ENCODE measurements at regions of chr3 and their contacts with region 1.

Region 1: DNA sequence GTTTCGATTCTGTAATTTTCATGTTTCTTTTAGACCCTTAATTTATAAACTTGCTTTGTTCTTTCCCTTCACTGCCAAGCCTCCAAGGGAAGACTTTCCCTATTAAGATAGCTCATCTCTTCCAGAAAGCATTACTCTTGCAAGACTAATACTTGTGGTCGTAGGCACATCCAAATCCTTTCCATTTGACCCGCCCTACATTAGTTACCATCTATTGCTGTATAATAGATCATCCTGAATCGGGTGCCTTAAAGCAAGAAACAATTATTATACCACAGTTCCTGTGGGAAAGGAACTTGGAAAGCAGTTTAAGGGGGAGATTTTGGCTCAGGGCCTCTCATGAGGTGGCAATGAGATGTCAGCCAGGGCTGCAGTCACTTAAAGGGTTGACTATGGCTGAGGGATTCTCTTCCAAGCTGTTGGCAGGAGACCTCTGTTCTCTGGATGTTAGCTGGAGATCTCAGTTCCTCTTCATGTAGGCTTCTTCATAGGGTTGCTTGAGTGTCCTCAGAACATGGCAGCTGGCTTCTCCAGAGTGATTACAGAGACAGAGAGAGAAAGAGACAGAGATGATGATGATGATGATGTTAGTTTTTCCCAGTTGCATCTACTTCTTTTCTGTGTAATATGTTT is 570.4 kb upstream of the TGFBR2 start:
- DNase-seq: peak; percentile 62
- H3K4me3 ChIP-seq: no peak overlapping the region
- H3K27ac ChIP-seq: peak overlapping the region; percentile 96
- H3K4me1 ChIP-seq: peaks cover 46% of the 10 kb centered on the region
- H3K27me3 ChIP-seq: no peaks in the 10 kb centered on the region
- CTCF ChIP-seq: no peak

Region 2: DNA sequence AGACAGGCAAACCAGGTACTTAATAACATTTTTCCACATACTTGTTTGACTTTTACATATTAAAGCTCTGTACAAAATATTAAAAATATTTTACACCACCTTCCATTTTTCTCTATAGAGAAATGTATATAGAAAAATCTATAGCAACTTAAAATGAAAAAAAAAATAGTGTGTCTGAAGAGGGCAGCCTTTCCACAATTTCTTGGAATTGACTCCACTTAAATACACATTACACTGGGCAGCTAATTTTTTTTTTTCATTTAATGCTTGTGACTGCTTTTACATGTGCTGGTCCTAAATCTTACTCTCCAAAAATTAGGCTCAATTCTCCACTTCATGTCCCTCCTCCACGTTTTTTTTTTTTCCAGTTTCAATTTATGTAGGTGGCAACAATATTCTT is 1182.2 kb before region 1 on chr3:
- CTCF ChIA-PET with region 1: no interaction called
- POLR2A ChIA-PET with region 1: no interaction called
- intact Hi-C with region 1: loop called (anchors 10 kb)
- DNase-seq: peak; percentile 31
- H3K4me3 ChIP-seq: no peak overlapping the region
- H3K27ac ChIP-seq: no peak overlapping the region
- H3K4me1 ChIP-seq: peaks cover 3% of the 10 kb centered on the region
- H3K27me3 ChIP-seq: no peaks in the 10 kb centered on the region
- CTCF ChIP-seq: no peak; the same call in 1 of the 2 replicates

Region 3: DNA sequence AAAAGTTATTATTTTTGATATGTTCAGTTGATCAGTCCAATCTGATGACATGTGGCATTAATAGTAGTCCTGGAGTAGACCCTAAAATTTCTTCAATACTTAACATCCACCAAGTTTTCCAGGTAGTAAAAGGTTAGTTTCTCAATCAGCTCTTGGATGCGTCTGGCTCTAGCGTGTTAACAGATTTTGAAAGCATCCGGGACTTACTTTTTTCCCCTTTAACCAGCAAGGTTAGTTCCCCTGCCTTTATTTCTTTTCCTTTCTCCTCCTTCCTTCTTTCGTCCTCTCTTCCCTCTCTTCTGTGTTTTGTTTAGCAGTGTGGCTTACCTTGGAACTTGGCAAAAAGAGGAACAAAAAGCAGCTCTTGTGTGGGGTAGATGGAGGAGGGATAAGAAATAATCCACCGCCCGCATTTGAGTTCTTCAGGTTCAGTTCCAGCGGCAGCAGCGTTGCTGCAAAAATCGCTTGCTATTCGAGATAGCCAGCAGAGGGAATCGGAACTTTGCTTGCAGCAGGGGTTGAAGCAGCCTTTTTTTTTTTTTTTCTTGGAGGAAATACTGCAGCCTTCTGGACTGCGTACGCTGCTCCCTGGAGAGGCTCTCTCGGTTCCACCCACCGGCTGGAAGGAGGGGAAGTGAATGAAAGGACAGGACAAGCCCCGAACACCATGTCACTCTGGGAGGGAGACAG is 755.5 kb before region 1 on chr3 and contains the start of gene RBMS3:
- CTCF ChIA-PET with region 1: no interaction called
- POLR2A ChIA-PET with region 1: no interaction called
- intact Hi-C with region 1: loop called (anchors 10 kb)
- DNase-seq: peak; percentile 97
- H3K4me3 ChIP-seq: peak within 1 kb of the TSS; percentile 59
- H3K27ac ChIP-seq: peak within 1 kb of the TSS; percentile 67
- H3K4me1 ChIP-seq: peaks cover 20% of the 10 kb centered on the region
- H3K27me3 ChIP-seq: no peaks in the 10 kb centered on the region
- CTCF ChIP-seq: peak; percentile 66
- total RNA-seq, gene RBMS3: 5.9 and 7.9 TPM in 2 replicates

Region 4: DNA sequence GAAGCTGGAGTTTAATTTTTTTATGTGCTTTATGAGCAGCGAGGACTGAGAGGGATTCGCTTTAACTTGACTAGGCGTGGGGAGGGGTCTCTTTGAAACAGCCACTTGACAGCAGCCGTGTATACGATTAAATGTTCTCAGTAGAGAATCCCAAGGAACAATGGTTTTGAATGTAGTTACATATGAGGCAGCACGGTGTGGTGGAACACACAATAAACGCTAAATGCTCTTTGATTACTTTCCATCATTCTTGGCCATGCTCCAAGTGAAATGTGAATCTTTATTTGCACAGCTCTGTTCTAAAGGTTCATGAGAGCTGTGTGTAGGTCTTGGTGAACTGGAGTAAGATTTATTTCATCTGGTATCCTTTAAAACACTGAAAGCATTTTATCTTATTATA is 318.9 kb after region 1 on chr3:
- CTCF ChIA-PET with region 1: no interaction called
- POLR2A ChIA-PET with region 1: no interaction called
- intact Hi-C with region 1: no loop called
- DNase-seq: no peak
- H3K4me3 ChIP-seq: no peak overlapping the region
- H3K27ac ChIP-seq: no peak overlapping the region
- H3K4me1 ChIP-seq: peaks cover 39% of the 10 kb centered on the region
- H3K27me3 ChIP-seq: no peaks in the 10 kb centered on the region
- CTCF ChIP-seq: no peak

Region 5: DNA sequence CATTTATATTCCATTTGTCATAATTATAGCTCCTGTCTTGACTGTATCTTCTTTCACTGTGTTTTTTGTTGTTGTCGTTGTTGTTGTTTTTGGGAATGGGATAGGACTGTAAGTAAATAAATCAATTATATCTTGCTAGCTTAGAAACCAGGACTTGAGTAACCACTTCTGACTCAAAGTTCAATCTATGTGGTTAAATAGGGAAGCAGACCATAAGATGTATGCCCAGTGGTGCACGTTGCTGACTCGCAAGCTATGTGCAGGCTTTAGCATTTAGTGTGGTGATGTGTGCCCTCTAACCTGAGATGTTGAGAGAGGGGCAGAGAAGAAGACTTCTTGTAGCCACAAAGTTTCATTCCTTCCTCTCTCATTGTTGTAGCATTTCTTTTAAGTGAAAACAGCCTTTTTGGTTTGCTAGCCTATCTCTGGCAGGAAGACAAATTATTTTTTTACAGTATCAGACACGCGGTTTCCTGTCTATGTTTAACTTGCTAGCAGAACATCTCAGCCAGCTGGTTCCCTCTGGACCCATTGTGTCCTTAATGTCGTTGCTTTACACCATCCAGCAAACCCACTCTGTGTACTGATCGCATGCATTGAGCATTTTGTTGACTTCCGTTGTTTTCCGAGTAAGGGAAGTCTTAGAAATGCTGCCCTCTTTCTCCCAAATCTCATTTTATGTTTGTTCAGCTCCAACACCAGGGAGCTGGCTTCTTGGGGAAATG is 622.4 kb after region 1 on chr3:
- CTCF ChIA-PET with region 1: interaction called, 10 read pairs
- POLR2A ChIA-PET with region 1: no interaction called
- intact Hi-C with region 1: no loop called
- DNase-seq: peak; percentile 84
- H3K4me3 ChIP-seq: peak overlapping the region; percentile 5
- H3K27ac ChIP-seq: peak overlapping the region; percentile 92
- H3K4me1 ChIP-seq: peaks cover 98% of the 10 kb centered on the region
- H3K27me3 ChIP-seq: no peaks in the 10 kb centered on the region
- CTCF ChIP-seq: peak; percentile 42

Region 6: GRCh38 chr3:30890907-30891306 is 854.9 kb after region 1 on chr3:
- CTCF ChIA-PET with region 1: no interaction called
- POLR2A ChIA-PET with region 1: no interaction called
- intact Hi-C with region 1: loop called (anchors 2 kb)
- DNase-seq: peak; percentile 97
- H3K4me3 ChIP-seq: peak overlapping the region; percentile 4
- H3K27ac ChIP-seq: peak overlapping the region; percentile 92
- H3K4me1 ChIP-seq: peaks cover 54% of the 10 kb centered on the region
- H3K27me3 ChIP-seq: no peaks in the 10 kb centered on the region
- CTCF ChIP-seq: no peak

Measured in A673 (cell line).